Gastrocnemius medialis (tissue), 4 donors: ENCODE measurements at regions of chr5 and their contacts with region 1.

Region 1: DNA sequence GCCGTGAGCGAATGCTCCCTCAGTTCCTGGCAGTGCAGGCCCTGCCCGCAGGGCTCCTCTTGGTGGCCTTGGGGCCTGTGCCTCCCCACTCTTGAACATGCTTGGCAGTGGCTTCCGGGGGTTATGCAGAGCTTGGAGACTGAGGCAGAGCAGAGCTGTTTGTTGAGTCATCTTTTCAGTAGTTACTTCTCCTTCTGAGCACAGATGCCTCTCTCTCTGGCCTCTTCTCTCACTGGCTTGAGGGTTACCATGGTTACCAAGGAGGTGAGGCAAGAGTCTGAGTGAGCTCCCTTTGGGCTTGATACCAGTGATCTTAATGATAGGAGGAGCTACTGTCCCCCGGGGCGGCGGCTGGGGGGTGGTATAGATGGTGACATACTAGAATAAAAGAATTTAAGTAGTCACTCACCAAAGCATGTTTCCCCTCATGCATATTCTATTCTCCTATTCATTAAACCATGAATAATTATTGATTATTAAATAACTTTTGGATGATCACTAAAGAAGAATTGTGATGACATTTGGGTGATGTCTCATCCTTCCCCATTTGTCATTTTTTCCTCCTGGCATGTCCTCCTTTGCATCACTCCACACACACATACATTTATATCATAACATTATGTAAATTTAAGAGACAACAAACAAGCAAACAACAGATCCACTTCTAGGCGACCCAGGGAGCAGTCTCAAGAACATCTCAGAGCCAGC is 111.1 kb downstream of the ARHGAP26 start:
- DNase-seq: no peak
- ATAC-seq: no peak
- H3K4me3 ChIP-seq: no peak overlapping the region
- H3K27ac ChIP-seq: no peak overlapping the region
- H3K4me1 ChIP-seq: no peaks in the 10 kb centered on the region
- H3K27me3 ChIP-seq: no peaks in the 10 kb centered on the region
- CTCF ChIP-seq: no peak
- POLR2A ChIP-seq: no peak

Region 2: GRCh38 chr5:142655339-142656267 is 225.6 kb before region 1 on chr5:
- in situ Hi-C with region 1: no loop called
- intact Hi-C with region 1: loop called (anchors 5 kb)
- DNase-seq: peak; percentile 53 to 74
- ATAC-seq: peak; percentile 81 to 92
- H3K4me3 ChIP-seq: no peak overlapping the region
- H3K27ac ChIP-seq: peak overlapping the region in 3 of 4 donors; percentile 0 to 14 (median 1)
- H3K4me1 ChIP-seq: peaks cover 4 to 20% of the 10 kb centered on the region in 2 donors
- H3K27me3 ChIP-seq: no peaks in the 10 kb centered on the region
- CTCF ChIP-seq: peak; percentile 87 to 98 (median 94)
- POLR2A ChIP-seq: no peak

Region 3: DNA sequence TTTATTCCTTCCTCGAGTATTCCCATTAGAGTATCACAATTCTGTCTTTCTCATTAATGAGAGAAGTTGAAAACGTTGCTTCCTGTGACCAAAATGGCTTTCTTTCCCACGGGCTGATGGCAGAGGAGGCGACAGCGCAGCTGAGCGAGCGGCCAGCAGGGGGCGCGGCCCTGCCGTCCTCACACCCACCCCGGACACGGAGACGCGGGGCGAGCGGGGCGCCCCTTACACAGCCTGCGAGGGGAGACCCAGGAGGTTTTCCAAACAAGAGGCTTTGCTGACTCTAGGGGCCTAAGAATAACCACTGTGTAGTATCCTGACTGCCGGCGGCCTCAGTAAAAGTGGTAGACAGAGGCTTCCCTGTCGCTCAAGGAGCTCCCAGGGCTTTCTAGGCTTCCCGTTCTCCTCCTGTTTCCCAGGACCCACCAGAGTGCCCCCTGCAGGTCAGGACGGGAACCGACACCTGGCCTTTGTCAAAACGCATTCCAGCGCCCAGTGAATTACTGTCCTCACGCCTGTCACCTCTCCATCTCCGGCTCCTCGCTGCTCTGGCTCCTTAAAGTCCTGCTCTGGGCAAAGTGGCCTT is 168.0 kb before region 1 on chr5:
- in situ Hi-C with region 1: loop called in 1 of 4 experiments (anchors 5 kb)
- intact Hi-C with region 1: loop called (anchors 2 kb)
- DNase-seq: peak; percentile 68 to 83
- ATAC-seq: peak; percentile 95 to 97
- H3K4me3 ChIP-seq: peak overlapping the region; percentile 59 to 65 (median 62)
- H3K27ac ChIP-seq: peak overlapping the region; percentile 71 to 83 (median 80)
- H3K4me1 ChIP-seq: peaks cover 0 to 3% of the 10 kb centered on the region in 2 donors
- H3K27me3 ChIP-seq: no peaks in the 10 kb centered on the region
- CTCF ChIP-seq: peak; percentile 93 to 97 (median 96)
- POLR2A ChIP-seq: no peak

Region 4: DNA sequence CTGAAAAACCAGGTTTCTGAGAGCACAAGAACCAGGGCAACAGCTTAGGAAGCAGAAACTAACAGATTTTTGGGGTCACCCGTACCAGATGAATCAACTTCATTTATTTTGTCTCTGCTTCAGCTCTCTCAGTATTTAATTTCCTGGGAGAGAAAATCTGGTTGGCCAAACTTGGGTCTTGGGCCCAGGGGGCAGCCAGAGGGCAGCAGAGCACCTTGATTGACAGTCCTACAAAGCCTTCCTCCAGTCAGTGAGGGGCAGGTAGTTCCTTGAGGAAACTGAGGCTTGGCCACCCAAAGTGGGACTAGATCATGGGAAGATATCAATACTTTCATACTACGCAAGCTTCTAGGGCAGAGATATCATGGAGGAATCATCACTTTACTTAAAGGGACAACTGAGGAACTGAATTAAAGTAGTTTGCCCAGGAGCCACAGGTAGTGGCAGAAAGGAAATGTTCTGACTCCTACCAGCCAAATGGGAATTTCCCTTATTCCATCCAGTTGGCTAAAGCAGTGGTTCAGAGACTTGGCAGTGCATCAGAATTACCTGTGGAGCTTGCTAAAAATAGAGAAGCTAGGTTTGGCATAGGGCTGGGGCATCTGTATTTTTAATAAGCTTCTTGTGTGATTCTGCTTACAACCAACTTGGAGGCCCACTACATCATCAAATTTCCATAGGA is 132.5 kb before region 1 on chr5:
- in situ Hi-C with region 1: loop called in 2 of 4 experiments (anchors 10 kb)
- intact Hi-C with region 1: loop called (anchors 1 kb)
- DNase-seq: peak in 1 of 2 donors; percentile 11
- ATAC-seq: peak in 1 of 2 donors; percentile 39
- H3K4me3 ChIP-seq: no peak overlapping the region
- H3K27ac ChIP-seq: no peak overlapping the region
- H3K4me1 ChIP-seq: peaks cover 20 to 29% of the 10 kb centered on the region in 2 donors
- H3K27me3 ChIP-seq: no peaks in the 10 kb centered on the region
- CTCF ChIP-seq: peak; percentile 53 to 83 (median 77)
- POLR2A ChIP-seq: no peak

Region 5: GRCh38 chr5:143931476-143931875 is 1050.2 kb after region 1 on chr5:
- in situ Hi-C with region 1: no loop called
- intact Hi-C with region 1: no loop called
- DNase-seq: peak; percentile 20 to 48
- ATAC-seq: peak; percentile 97 to 100
- H3K4me3 ChIP-seq: peak overlapping the region in 1 of 4 donors; percentile 13
- H3K27ac ChIP-seq: peak overlapping the region in 1 of 4 donors; percentile 35
- H3K4me1 ChIP-seq: peaks cover 0 to 5% of the 10 kb centered on the region in 2 donors
- H3K27me3 ChIP-seq: no peaks in the 10 kb centered on the region
- CTCF ChIP-seq: no peak
- POLR2A ChIP-seq: no peak